Panc1 (cell line): ENCODE measurements at regions of chr7 and their contacts with region 1.

Region 1: GRCh38 chr7:111752022-111752582 is 189.8 kb upstream of the IMMP2L start:
- DNase-seq: no peak
- ATAC-seq: peak; percentile 89
- H3K4me3 ChIP-seq: no peak overlapping the region
- H3K27ac ChIP-seq: no peak overlapping the region
- H3K4me1 ChIP-seq: no peaks in the 10 kb centered on the region
- H3K27me3 ChIP-seq: no peaks in the 10 kb centered on the region
- CTCF ChIP-seq: peak; percentile 92

Region 2: GRCh38 chr7:111259991-111260390 is 492.1 kb before region 1 on chr7:
- CTCF ChIA-PET with region 1: no interaction called
- POLR2A ChIA-PET with region 1: interaction called, 10 read pairs
- in situ Hi-C with region 1: no loop called
- intact Hi-C with region 1: no loop called
- DNase-seq: no peak
- ATAC-seq: no peak
- H3K4me3 ChIP-seq: no peak overlapping the region
- H3K27ac ChIP-seq: no peak overlapping the region
- H3K4me1 ChIP-seq: no peaks in the 10 kb centered on the region
- H3K27me3 ChIP-seq: no peaks in the 10 kb centered on the region
- CTCF ChIP-seq: no peak

Region 3: DNA sequence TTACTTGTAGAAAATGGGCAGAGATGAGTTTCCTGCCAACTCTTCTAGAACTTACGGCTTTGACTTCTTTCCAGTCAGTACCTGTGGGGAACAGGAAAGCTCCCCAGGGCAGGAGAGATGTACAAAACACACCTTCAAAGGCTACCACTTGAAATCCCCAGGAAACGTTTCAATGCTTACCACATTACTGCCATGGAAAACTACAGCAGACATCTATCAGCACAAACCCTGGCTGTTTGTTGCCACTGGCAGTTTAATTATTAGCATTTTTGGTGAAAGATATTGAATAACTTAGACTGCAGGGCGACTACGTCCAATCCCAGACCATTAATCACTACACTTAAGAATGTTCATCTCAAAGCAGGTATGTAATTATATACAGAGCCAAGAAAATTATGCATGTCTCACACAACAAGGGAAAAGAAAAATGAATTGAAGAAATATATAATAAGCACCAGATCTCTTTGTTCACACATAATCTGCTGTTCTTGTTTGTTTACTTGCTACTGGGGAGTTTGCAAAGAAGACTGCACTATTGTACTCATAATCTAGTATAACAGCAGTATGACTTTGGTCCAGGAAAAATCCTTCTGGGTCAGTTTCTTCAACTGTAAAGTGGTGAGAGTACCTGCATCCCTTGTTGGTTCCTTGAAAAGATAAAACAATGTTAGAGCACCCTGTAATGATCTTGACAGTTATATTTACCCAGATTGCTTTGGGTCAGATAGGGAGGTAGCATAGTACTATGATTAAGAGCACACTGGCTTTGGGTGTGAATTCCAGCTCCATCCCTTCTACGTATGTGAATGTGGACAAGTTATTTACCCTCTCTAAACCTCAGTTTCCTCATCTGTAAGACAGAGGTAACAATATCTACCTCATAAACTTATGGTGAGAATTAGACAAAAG is 315.8 kb after region 1 on chr7:
- CTCF ChIA-PET with region 1: no interaction called
- POLR2A ChIA-PET with region 1: no interaction called
- in situ Hi-C with region 1: no loop called
- intact Hi-C with region 1: no loop called
- DNase-seq: no peak
- ATAC-seq: no peak
- H3K4me3 ChIP-seq: no peak overlapping the region
- H3K27ac ChIP-seq: no peak overlapping the region
- H3K4me1 ChIP-seq: no peaks in the 10 kb centered on the region; the same call in 1 of the 2 replicates
- H3K27me3 ChIP-seq: no peaks in the 10 kb centered on the region
- CTCF ChIP-seq: no peak

Region 4: GRCh38 chr7:112898432-112899290 is 1146.6 kb after region 1 on chr7:
- CTCF ChIA-PET with region 1: no interaction called
- POLR2A ChIA-PET with region 1: no interaction called
- in situ Hi-C with region 1: no loop called
- intact Hi-C with region 1: loop called (anchors 10 kb)
- DNase-seq: peak; percentile 59
- ATAC-seq: peak; percentile 92
- H3K4me3 ChIP-seq: no peak overlapping the region
- H3K27ac ChIP-seq: no peak overlapping the region
- H3K4me1 ChIP-seq: no peaks in the 10 kb centered on the region
- H3K27me3 ChIP-seq: no peaks in the 10 kb centered on the region
- CTCF ChIP-seq: peak; percentile 86